Heart right ventricle (tissue), 16 donors: ENCODE measurements at regions of chr18 and their contacts with region 1.

Region 1: DNA sequence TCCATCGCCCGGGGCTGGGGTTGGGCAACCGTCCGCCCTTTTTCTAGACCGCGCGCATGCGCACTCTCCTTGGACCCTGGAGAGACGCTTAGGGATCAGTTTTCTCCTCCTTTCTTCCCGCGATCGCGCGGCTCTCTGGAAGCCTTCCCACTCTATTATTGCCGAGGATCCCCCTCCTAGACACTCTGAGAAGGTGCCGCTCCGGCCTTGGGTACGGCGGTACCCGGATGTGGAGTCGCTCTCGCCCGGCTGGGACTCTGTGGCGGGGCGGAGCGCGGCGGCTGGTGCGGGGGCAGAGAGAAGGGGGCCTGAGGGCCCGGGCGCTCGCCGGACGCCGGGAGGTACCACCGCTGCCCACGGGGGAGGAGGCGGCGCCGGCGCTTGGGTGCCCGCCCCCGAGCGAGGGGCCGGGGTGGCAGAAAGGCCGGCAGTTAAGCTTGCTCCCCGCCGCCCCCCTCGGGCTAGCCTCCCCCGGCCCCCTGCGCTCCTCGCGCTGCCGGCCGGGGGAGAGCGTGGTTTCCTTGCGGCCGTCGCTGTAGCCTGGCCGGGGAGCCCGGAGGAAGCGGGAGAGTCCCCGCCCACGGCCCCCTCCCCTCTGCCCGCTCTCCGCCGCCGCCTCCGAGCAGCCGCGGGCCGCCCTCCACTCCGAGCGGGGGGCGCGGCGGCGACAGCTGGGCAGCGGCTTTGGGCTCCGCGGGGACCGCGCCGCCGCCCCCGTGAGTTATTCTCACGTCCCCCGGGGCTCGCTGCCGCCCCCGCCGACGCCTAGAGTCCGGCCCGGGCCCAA is at the start of gene MIB1:
- DNase-seq: peak; percentile 64 to 99
- ATAC-seq: peak; percentile 81 to 95 (median 86)
- H3K4me3 ChIP-seq: peak within 1 kb of the TSS; percentile 66 to 99 (median 89)
- H3K27ac ChIP-seq: peak within 1 kb of the TSS; percentile 83 to 99 (median 98)
- H3K4me1 ChIP-seq: peaks cover 0 to 44% (median 14%) of the 10 kb centered on the region in 9 donors
- H3K27me3 ChIP-seq: no peaks in the 10 kb centered on the region
- CTCF ChIP-seq: peak in 1 of 9 donors; percentile 6
- total RNA-seq, gene MIB1: 16.8 to 32.2 (median 26.2) TPM

Region 2: GRCh38 chr18:21489119-21489750 is 251.7 kb before region 1 on chr18:
- intact Hi-C with region 1: no loop called
- DNase-seq: peak in 1 of 2 donors; percentile 26
- ATAC-seq: peak in 7 of 8 donors; percentile 65 to 83 (median 72)
- H3K4me3 ChIP-seq: no peak overlapping the region
- H3K27ac ChIP-seq: no peak overlapping the region
- H3K4me1 ChIP-seq: peaks cover 0 to 6% (median 0%) of the 10 kb centered on the region in 9 donors
- H3K27me3 ChIP-seq: no peaks in the 10 kb centered on the region
- CTCF ChIP-seq: peak; percentile 35 to 75 (median 72)

Region 3: DNA sequence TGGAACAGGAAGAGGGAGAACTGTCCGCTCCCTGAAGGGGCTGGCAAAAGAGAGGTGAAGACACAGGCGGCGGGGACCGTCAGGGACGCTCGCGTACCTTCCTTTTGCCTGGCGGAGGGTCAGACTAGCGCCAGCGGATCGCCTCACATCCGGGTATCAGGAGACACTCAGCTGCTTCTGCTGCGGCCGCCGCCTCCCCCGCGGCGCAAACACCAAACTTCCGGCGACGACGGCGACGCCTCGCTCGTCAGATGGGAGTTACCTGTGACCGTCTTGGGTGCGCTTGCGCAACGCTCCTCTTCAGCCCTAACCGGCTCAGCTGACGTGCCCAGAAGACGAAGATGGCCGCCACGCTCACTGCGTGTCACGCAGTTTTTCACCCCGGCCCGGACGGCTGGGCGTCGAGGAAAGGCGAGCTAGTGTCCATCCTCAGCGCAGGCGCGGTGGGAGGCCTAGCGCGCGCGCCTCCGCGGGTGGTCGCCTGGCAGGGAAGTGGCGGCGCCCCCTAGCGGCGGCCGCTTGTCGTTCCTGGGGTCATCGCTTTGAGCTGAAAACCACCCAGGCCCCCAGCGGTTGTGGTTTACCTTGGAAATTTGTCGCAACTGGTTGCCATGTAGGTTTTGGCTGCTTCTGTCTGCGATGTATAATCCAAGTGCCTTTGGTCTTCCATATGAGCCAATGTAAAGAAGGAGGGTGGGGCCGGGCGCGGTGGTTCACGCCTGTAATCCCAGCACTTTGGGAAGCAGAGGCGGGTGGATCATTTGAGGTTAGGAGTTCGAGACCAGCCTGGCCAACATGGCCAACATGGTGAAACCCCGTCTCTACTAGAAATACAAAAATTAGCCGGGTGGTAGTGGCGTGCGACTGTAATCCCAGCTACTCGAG is 140.1 kb before region 1 on chr18 and contains the start of gene ESCO1:
- intact Hi-C with region 1: loop called in 2 of 10 experiments (anchors 5 kb)
- DNase-seq: peak; percentile 93
- ATAC-seq: peak; percentile 94 to 97 (median 96)
- H3K4me3 ChIP-seq: peak within 1 kb of the TSS; percentile 81 to 100 (median 92)
- H3K27ac ChIP-seq: peak within 1 kb of the TSS; percentile 86 to 99 (median 97)
- H3K4me1 ChIP-seq: peaks cover 0 to 46% (median 24%) of the 10 kb centered on the region in 9 donors
- H3K27me3 ChIP-seq: no peaks in the 10 kb centered on the region
- CTCF ChIP-seq: peak; percentile 93 to 100 (median 98)
- total RNA-seq, gene ESCO1: 8.7 to 12.9 (median 9.9) TPM

Region 4: DNA sequence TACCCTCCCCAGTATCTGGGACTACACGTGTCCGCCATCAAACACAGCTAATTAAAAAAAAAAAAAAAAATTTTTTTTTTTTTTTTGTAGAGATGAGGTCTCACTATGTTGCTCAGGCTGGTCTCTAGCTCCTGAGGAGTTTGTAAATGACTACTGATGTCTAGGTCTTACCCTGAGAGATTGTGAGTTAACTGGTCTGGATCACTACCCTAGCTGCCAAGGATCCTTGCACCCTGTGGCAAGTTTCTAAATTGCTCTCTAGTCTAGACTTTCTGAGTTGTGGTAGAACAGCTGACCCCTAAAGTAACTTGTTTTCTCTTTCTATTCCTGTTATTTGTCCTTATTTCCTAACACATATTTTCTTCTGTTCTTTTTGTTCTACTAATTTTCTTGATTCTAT is 80.8 kb before region 1 on chr18:
- intact Hi-C with region 1: no loop called
- DNase-seq: no peak
- ATAC-seq: no peak
- H3K4me3 ChIP-seq: no peak overlapping the region
- H3K27ac ChIP-seq: no peak overlapping the region
- H3K4me1 ChIP-seq: no peaks in the 10 kb centered on the region
- H3K27me3 ChIP-seq: no peaks in the 10 kb centered on the region
- CTCF ChIP-seq: no peak

Region 5: DNA sequence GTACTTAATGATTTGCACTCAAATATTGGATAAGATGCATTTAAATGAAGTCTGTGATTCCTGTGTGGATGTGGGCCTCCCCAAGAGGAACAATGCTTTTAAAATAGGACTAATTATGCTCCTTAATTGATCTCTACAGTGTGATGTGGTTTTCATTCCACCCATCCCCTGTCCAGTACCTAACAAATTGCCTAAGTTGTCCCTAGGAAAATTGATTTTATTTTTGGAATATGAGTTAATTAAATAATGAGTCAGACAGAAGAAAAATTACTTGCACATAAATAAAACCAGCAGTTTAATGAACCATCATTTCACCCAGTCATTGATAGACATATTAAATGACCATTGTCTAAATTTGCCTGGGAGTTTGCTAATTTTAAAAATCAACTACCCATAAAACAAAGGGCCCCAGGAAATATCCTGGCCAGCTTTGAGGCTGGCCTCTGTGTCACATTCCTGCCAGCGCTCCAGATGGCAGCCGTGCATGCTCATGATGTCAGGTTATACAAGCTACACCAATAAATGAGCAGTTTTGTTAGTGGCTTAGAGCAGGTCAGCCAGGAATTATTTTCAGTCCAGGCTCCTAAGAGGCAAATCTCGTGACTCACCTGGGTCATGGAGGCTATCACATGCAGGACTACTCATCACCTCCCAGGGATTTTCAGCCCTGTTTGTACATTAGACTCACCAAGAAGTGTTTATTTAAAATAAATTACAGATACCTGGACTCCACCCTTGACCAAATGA is 68.2 kb before region 1 on chr18:
- intact Hi-C with region 1: loop called in 1 of 10 experiments (anchors 10 kb)
- DNase-seq: peak; percentile 23 to 27
- ATAC-seq: peak; percentile 46 to 93 (median 84)
- H3K4me3 ChIP-seq: no peak overlapping the region
- H3K27ac ChIP-seq: peak overlapping the region in 6 of 10 donors; percentile 0 to 57 (median 48)
- H3K4me1 ChIP-seq: peaks cover 0 to 13% (median 0%) of the 10 kb centered on the region in 9 donors
- H3K27me3 ChIP-seq: no peaks in the 10 kb centered on the region
- CTCF ChIP-seq: peak in 1 of 9 donors; percentile 10

Region 6: DNA sequence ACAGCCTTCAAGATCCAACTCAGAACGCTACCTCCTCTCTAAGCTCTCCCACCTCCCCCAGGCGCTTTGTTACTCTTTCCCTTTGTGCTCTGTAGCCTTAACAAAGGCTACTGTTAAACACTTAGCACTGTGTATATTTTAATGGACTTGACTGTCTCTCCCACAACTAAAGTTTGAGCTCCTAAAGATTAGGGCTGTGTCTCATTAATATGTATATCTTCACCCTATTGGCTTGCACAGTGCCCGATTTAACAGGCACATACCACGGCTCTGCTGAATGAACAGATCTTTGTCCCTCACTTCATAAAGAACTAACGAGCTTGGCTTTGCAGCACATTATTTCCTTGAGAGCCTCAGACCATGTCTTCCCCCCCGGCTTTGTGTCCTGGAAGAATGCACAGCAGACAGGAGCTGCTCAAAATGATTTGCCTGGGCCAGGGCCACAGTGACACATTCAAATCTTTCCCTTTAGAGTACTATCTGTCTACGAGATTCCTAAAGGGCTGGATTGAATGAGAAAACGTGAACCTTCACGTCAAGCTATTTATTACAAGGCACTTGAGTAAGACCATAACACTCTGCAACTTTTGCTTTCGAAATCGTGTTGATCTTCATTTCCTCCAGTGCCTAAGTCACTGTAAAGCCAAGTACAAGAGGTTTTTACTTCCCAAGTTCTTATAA is 58.4 kb before region 1 on chr18:
- intact Hi-C with region 1: loop called in 2 of 10 experiments (anchors 10 kb)
- DNase-seq: peak in 1 of 2 donors; percentile 9
- ATAC-seq: peak; percentile 44 to 88 (median 74)
- H3K4me3 ChIP-seq: peak overlapping the region in 9 of 10 donors; percentile 5 to 50 (median 45)
- H3K27ac ChIP-seq: peak overlapping the region in 9 of 10 donors; percentile 33 to 86 (median 69)
- H3K4me1 ChIP-seq: peaks cover 0 to 32% (median 8%) of the 10 kb centered on the region in 9 donors
- H3K27me3 ChIP-seq: no peaks in the 10 kb centered on the region
- CTCF ChIP-seq: no peak

Region 7: DNA sequence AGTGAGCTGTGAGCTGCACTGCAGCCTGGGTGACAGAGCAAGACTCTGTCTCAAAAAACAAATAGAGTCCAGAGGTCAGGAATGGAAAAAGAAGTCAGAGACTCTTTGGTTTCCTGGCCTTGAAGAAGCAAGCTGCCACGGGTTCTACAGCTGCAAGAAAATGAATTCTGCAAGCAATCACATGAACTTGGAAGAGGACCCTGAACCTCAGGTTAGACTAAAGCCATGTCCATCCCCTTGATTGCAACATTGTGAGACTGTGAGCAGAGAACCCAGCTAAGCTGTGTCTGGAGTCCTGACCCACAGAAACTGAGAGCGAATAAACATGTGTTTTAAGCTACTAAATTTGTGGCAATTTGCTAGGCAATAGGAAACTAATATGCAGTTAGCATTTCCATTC is 13.2 kb before region 1 on chr18:
- intact Hi-C with region 1: no loop called
- DNase-seq: no peak
- ATAC-seq: no peak
- H3K4me3 ChIP-seq: no peak overlapping the region
- H3K27ac ChIP-seq: no peak overlapping the region
- H3K4me1 ChIP-seq: no peaks in the 10 kb centered on the region
- H3K27me3 ChIP-seq: no peaks in the 10 kb centered on the region
- CTCF ChIP-seq: no peak

Region 8: GRCh38 chr18:21997207-21998143 is 256.6 kb after region 1 on chr18:
- intact Hi-C with region 1: no loop called
- DNase-seq: peak in 1 of 2 donors; percentile 20
- ATAC-seq: peak; percentile 32 to 87 (median 65)
- H3K4me3 ChIP-seq: no peak overlapping the region
- H3K27ac ChIP-seq: peak overlapping the region in 9 of 10 donors; percentile 17 to 82 (median 68)
- H3K4me1 ChIP-seq: peaks cover 0 to 34% (median 9%) of the 10 kb centered on the region in 9 donors
- H3K27me3 ChIP-seq: no peaks in the 10 kb centered on the region
- CTCF ChIP-seq: peak; percentile 65 to 90 (median 85)

Region 9: GRCh38 chr18:22977847-22978701 is 1237.2 kb after region 1 on chr18:
- intact Hi-C with region 1: loop called in 1 of 10 experiments (anchors 10 kb)
- DNase-seq: no peak
- ATAC-seq: peak in 1 of 8 donors; percentile 41
- H3K4me3 ChIP-seq: no peak overlapping the region
- H3K27ac ChIP-seq: peak overlapping the region in 1 of 10 donors; percentile 17
- H3K4me1 ChIP-seq: peaks cover 0 to 13% (median 0%) of the 10 kb centered on the region in 9 donors
- H3K27me3 ChIP-seq: no peaks in the 10 kb centered on the region
- CTCF ChIP-seq: no peak